AG04449 (cell line): ENCODE measurements at regions of chr9 and their contacts with region 1.

Region 1: DNA sequence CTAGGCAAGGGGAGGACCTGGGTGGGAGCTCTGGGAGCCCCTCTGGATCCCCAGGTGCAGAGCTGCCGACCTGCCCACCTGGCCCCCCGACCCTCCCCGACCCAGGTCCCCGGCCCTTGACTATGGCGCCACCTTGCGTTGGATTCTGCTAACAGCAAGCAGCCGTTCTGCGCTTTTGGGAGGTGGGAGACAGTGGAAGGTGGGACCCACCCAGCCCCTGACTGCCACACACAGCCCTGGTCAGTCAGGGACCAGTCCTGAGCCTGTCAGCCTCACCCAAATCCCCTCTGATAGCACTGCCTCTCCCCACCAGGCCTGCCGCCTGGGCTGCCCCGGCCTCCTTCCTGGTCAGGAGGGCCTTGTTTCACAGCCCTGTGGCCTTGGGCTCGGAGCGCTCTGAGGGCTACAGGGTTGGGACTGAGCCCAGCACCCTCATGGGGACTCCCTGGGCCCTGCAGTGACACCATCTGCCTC is 77.9 kb downstream of the HMCN2 start:
- DNase-seq: no peak
- H3K4me3 ChIP-seq: no peak overlapping the region
- CTCF ChIP-seq: peak; percentile 86

Region 2: DNA sequence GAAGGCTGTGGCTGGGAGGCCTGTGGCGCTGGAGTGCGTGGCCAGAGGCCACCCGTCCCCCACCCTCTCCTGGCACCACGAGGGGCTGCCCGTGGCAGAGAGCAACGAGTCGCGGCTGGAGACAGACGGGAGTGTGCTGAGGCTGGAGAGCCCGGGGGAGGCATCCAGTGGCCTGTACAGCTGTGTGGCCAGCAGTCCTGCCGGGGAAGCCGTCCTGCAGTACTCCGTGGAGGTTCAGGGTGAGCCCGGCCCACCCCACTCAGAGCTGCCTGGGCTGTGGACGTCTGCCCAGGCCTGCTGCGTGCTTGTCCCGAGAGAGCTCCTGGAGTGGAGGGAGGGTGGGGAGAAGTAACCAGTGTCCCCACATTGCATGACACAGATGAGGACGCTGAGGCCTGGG is 11.3 kb after region 1 on chr9:
- CTCF ChIA-PET with region 1: interaction called, 14 read pairs
- POLR2A ChIA-PET with region 1: no interaction called
- DNase-seq: no peak
- H3K4me3 ChIP-seq: no peak overlapping the region
- CTCF ChIP-seq: no peak